Activated CD4-positive, alpha-beta T cell treated with anti-CD3 and anti-CD28 coated beads for 36 hours (primary cell): ENCODE measurements at regions of chr15 and their contacts with region 1.

Region 1: DNA sequence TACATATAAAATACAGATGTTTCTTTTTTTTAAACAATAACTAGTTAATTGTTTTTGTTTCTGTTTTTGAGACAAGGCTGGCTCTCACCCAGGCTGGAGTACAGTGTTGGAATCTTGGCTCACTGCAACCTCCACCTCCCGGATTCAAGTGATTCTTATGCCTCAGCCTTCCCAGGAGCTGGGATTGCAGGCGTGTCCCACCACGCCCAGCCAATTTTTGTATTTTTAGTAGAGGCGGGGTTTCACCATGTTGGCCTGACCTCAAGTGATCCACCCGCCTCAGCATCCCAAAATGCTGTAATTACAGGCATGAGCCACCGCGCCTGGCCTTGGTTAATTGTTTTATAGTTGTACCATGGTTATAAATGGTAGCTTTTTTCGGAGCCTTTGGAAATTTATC is 72.3 kb downstream of the PIAS1 start:
- DNase-seq: no peak
- ATAC-seq: no peak
- H3K4me3 Mint-ChIP-seq: no peak overlapping the region
- H3K27ac Mint-ChIP-seq: no peak overlapping the region
- H3K4me1 Mint-ChIP-seq: peaks cover 4% of the 10 kb centered on the region
- H3K27me3 Mint-ChIP-seq: no peaks in the 10 kb centered on the region

Region 2: GRCh38 chr15:67383899-67384298 is 742.5 kb before region 1 on chr15:
- CTCF ChIA-PET with region 1: no interaction called
- POLR2A ChIA-PET with region 1: no interaction called
- intact Hi-C with region 1: no loop called
- DNase-seq: no peak
- ATAC-seq: no peak
- H3K4me3 Mint-ChIP-seq: no peak overlapping the region
- H3K27ac Mint-ChIP-seq: no peak overlapping the region
- H3K4me1 Mint-ChIP-seq: no peaks in the 10 kb centered on the region
- H3K27me3 Mint-ChIP-seq: peaks cover 3% of the 10 kb centered on the region

Region 3: DNA sequence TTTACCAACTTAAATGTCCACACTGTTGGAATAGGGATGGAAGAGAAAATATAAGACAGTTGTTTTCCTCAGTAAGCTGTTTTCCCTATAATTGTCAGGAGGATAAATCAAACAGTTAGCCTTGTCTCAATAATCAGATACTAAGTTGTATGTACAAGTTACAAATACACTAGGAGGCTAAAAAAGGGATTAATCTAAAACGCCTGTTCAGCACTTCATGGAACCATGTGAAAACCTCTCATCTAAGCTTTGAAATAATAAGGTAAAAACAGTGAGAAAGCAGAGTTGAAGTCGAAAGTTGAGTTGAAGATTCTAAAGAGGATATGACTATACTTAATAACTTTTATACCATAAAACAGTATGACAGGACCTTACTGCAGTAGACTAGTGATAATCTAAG is 16.7 kb after region 1 on chr15:
- CTCF ChIA-PET with region 1: no interaction called
- POLR2A ChIA-PET with region 1: no interaction called
- intact Hi-C with region 1: loop called in 1 of 2 experiments (anchors 2 kb)
- DNase-seq: no peak
- ATAC-seq: no peak
- H3K4me3 Mint-ChIP-seq: no peak overlapping the region
- H3K27ac Mint-ChIP-seq: no peak overlapping the region
- H3K4me1 Mint-ChIP-seq: peaks cover 18% of the 10 kb centered on the region
- H3K27me3 Mint-ChIP-seq: no peaks in the 10 kb centered on the region